Activated T-helper 2 cell treated with anti-CD3 and anti-CD28 coated beads, Interferon-gamma antibody, Interleukin-2, Interleukin-4, amounts not matched to agents 10 μg/mL and 5 μg/mL and 100 μg/mL, durations not matched to agents 14 hours and 24 hours and 36 hours (primary cell): ENCODE measurements at regions of chr5 and their contacts with region 1.

Region 1: GRCh38 chr5:163347671-163348070 is 89.7 kb upstream of the CCNG1 start:
- DNase-seq: peak; percentile 34
- H3K4me3 Mint-ChIP-seq: no peak overlapping the region
- H3K27ac Mint-ChIP-seq: no peak overlapping the region
- H3K4me1 Mint-ChIP-seq: no peaks in the 10 kb centered on the region
- H3K27me3 Mint-ChIP-seq: peaks cover 6% of the 10 kb centered on the region

Region 2: DNA sequence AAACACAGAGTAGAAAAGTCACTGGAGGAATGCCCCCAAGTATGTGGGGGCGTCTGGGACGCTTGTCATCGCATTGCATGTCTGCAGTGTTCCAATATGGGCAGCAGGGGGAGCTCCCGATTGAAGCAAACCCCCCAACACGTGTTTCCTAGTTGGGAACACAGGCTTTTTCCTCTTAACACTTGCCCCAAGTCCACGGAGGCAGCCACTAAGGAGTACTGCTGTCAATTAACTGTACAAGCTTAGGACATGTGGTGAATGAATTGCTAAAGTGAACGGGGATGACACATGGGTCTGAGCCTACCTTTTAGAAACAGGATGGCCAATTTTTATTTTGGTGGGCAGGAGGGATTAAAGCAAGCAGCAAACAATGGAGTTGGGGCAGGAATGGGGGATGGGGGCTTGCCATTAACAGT is 1803.3 kb before region 1 on chr5:
- intact Hi-C with region 1: loop called (anchors 2 kb)
- DNase-seq: no peak
- H3K4me3 Mint-ChIP-seq: no peak overlapping the region
- H3K27ac Mint-ChIP-seq: no peak overlapping the region
- H3K4me1 Mint-ChIP-seq: peaks cover 19% of the 10 kb centered on the region
- H3K27me3 Mint-ChIP-seq: peaks cover 44% of the 10 kb centered on the region

Region 3: GRCh38 chr5:163033646-163034045 is 314.0 kb before region 1 on chr5:
- intact Hi-C with region 1: no loop called
- DNase-seq: no peak
- H3K4me3 Mint-ChIP-seq: no peak overlapping the region
- H3K27ac Mint-ChIP-seq: no peak overlapping the region
- H3K4me1 Mint-ChIP-seq: no peaks in the 10 kb centered on the region
- H3K27me3 Mint-ChIP-seq: no peaks in the 10 kb centered on the region

Region 4: GRCh38 chr5:163104464-163104863 is 243.2 kb before region 1 on chr5:
- intact Hi-C with region 1: loop called (anchors 5 kb)
- DNase-seq: no peak
- H3K4me3 Mint-ChIP-seq: no peak overlapping the region
- H3K27ac Mint-ChIP-seq: no peak overlapping the region
- H3K4me1 Mint-ChIP-seq: no peaks in the 10 kb centered on the region
- H3K27me3 Mint-ChIP-seq: no peaks in the 10 kb centered on the region

Region 5: GRCh38 chr5:163306421-163306820 is 41.2 kb before region 1 on chr5:
- intact Hi-C with region 1: loop called (anchors 1 kb)
- DNase-seq: no peak
- H3K4me3 Mint-ChIP-seq: no peak overlapping the region
- H3K27ac Mint-ChIP-seq: no peak overlapping the region
- H3K4me1 Mint-ChIP-seq: peaks cover 17% of the 10 kb centered on the region
- H3K27me3 Mint-ChIP-seq: peaks cover 13% of the 10 kb centered on the region

Region 6: DNA sequence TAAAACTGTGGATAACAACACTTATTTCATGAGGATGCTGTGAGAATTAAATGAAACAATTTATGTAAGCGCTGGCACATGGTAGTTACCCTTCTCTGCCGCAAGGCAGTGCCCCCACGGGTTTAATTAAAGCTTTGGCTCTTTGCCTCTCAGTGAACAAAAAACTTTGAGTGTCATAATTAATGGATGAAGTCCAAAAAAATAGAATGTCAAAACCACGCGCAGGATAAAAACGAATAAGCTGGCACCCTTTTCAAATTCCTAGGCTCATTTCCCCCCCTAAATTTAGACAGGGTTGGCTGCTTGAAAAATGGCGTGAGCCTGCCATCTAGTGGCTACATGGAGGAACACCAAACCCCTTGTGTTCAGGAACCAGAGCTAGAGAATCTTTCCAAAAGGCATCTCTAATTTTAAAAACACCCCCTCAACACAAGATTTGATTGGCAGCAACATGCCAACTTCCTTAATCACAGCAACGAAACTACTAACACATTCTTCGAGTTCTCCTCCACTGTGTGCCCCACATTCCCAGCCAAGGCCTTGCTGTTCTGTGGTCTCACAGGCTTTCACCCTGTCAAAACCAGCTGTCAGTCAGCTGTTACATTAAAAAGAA is 60.7 kb after region 1 on chr5:
- intact Hi-C with region 1: loop called (anchors 5 kb)
- DNase-seq: peak; percentile 27
- H3K4me3 Mint-ChIP-seq: no peak overlapping the region
- H3K27ac Mint-ChIP-seq: no peak overlapping the region
- H3K4me1 Mint-ChIP-seq: peaks cover 2% of the 10 kb centered on the region
- H3K27me3 Mint-ChIP-seq: peaks cover 15% of the 10 kb centered on the region